ENCODE measurements at regions of chr1 and their contacts with region 1.

Region 1: GRCh38 chr1:167220537-167221125 is at the start of gene POU2F1:
- DNase-seq: peak; percentile 97
- ATAC-seq: peak; percentile 70
- H3K4me3 Mint-ChIP-seq: peak within 1 kb of the TSS; percentile 93
- H3K27ac Mint-ChIP-seq: peak within 1 kb of the TSS; percentile 89
- H3K4me1 Mint-ChIP-seq: peaks cover 37% of the 10 kb centered on the region
- H3K27me3 Mint-ChIP-seq: no peaks in the 10 kb centered on the region
- CTCF ChIP-seq: no peak
- total RNA-seq, gene POU2F1: 30.5 and 35.5 TPM in 2 replicates

Region 2: DNA sequence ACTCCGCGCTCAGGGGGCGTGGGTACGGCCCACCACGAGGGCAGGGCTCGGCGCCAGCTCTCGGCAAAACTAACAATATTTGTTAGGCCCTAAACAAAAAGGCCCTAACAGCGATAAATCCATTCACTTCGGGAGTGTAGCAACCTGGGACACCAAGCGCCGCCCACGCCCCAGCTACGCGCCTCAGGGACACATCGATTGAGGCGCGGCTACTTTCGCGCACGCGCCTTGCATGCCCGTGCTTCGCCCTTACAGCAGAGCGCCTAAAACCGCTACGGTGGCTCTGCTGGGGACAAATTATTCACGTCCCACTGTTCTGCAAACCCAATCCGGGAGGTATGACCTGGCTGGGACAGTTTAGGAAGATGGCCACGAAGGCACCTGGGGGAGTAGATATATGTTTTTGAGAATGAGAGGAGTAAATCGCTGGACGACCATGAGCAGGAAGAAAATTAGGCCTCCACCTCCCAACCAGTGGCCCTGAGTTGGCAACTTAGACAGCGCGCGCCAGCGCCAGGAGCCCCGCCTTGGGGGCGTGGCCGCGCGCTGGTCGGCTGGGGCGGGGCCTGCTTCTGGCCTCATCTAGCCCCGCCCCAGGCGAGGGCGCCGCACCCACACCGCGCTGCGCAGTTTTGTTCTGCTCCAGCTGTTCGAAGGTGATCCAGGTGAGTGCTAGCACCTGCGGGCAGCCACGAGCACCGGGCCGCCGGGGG is 1589.8 kb before region 1 on chr1 and contains the start of gene MGST3:
- CTCF ChIA-PET with region 1: no interaction called
- POLR2A ChIA-PET with region 1: no interaction called
- intact Hi-C with region 1: loop called (anchors 10 kb)
- DNase-seq: peak; percentile 84
- ATAC-seq: peak; percentile 93
- H3K4me3 Mint-ChIP-seq: no peak within 1 kb of the TSS
- H3K27ac Mint-ChIP-seq: no peak within 1 kb of the TSS
- H3K4me1 Mint-ChIP-seq: peaks cover 33% of the 10 kb centered on the region
- H3K27me3 Mint-ChIP-seq: no peaks in the 10 kb centered on the region
- CTCF ChIP-seq: no peak
- total RNA-seq, gene MGST3: 31.3 and 33.4 TPM in 2 replicates

Region 3: DNA sequence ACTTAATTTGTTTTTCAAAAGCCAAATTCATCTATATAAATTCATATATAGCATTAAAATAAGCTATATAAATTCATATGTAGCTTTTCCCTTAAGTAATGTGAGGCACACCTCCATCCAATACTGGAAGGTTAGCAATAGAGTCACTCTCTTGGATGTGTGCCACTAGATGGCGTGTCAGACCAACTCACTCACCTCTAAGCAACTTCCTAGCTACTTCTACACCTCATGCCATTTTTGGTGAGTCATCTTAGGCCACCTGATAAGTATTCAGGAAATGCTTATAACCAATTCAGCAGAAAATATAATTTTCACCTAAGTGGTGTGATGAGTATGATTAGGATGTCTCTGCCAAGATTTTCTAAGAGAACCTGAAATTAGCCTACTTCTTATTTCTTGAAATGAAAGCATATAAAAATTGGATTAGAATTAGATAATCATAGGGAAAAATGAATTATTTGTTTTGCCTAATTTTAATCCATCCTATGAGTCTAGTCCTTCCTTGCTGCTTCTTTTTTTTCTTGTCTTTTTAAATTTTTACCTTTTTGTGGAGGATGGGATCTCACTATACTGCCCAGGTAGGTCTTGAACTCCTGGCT is 310.1 kb before region 1 on chr1:
- CTCF ChIA-PET with region 1: interaction called, 7 read pairs
- POLR2A ChIA-PET with region 1: interaction called, 5 read pairs
- intact Hi-C with region 1: loop called (anchors 2 kb)
- DNase-seq: peak; percentile 37
- ATAC-seq: peak; percentile 99
- H3K4me3 Mint-ChIP-seq: no peak overlapping the region
- H3K27ac Mint-ChIP-seq: no peak overlapping the region
- H3K4me1 Mint-ChIP-seq: peaks cover 6% of the 10 kb centered on the region
- H3K27me3 Mint-ChIP-seq: no peaks in the 10 kb centered on the region
- CTCF ChIP-seq: peak; percentile 61

Region 4: DNA sequence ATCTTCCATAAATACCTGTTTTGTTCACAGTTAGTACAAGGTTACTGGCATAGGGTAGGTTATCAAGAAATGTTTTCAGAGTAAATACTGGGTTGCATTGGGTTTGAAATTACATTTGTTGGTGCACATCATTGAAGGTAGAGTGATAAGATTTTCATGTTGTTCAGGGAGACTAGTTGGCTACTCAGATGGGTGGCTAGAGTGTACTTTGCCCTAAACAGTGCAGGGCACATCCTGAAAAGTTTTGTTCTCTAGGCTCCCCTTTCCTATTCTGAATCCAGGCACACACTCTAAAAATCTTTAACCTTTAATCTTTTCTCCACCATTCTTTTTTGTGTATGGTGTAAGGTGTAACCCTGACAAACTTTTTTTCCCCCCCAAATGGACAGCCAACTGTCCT is 18.1 kb after region 1 on chr1:
- CTCF ChIA-PET with region 1: interaction called, 3 read pairs
- POLR2A ChIA-PET with region 1: interaction called, 17 read pairs
- intact Hi-C with region 1: loop called (anchors 2 kb)
- DNase-seq: no peak
- ATAC-seq: no peak
- H3K4me3 Mint-ChIP-seq: no peak overlapping the region
- H3K27ac Mint-ChIP-seq: no peak overlapping the region
- H3K4me1 Mint-ChIP-seq: peaks cover 27% of the 10 kb centered on the region
- H3K27me3 Mint-ChIP-seq: no peaks in the 10 kb centered on the region
- CTCF ChIP-seq: no peak

Region 5: DNA sequence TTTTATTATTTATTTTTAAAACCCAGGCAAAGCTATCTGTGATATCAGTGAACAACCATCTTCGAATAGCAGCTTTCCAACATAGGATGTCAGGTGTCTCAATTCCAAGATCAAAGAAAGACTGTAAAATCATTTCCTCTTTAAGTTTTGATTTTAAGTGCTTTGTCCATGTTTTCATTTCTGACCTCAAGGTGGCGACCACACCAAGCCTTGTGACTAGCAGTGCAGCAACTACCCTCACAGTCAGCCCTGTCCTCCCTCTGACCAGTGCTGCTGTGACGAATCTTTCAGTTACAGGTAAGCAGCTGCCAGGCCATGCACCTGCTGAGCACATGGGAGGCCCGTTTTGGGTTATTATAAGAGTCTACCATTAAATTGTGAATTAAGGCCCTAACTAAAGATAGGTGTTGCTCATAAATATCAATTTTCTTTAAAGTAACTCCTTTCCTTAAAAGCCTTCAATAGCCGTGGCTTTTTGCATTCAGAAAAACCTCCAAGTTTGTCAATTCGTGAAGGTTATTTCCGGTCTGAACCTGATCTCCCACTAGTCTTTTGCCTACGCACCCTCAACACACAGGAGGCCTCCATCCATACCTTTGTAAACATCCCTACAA is 180.7 kb after region 1 on chr1:
- CTCF ChIA-PET with region 1: no interaction called
- POLR2A ChIA-PET with region 1: no interaction called
- intact Hi-C with region 1: no loop called
- DNase-seq: peak; percentile 26
- ATAC-seq: peak; percentile 68
- H3K4me3 Mint-ChIP-seq: no peak overlapping the region
- H3K27ac Mint-ChIP-seq: no peak overlapping the region
- H3K4me1 Mint-ChIP-seq: no peaks in the 10 kb centered on the region
- H3K27me3 Mint-ChIP-seq: no peaks in the 10 kb centered on the region
- CTCF ChIP-seq: peak; percentile 12

Region 6: GRCh38 chr1:167430134-167430856 is 209.7 kb after region 1 on chr1:
- CTCF ChIA-PET with region 1: no interaction called
- POLR2A ChIA-PET with region 1: interaction called, 10 read pairs
- intact Hi-C with region 1: no loop called
- DNase-seq: no peak
- ATAC-seq: peak; percentile 35
- H3K4me3 Mint-ChIP-seq: peak overlapping the region; percentile 61
- H3K27ac Mint-ChIP-seq: peak overlapping the region; percentile 90
- H3K4me1 Mint-ChIP-seq: peaks cover 53% of the 10 kb centered on the region
- H3K27me3 Mint-ChIP-seq: no peaks in the 10 kb centered on the region
- CTCF ChIP-seq: no peak

Region 7: GRCh38 chr1:167627865-167628641 is 407.4 kb after region 1 on chr1:
- CTCF ChIA-PET with region 1: no interaction called
- POLR2A ChIA-PET with region 1: interaction called, 4 read pairs
- intact Hi-C with region 1: loop called (anchors 5 kb)
- DNase-seq: peak; percentile 52
- ATAC-seq: peak; percentile 70
- H3K4me3 Mint-ChIP-seq: peak overlapping the region; percentile 94
- H3K27ac Mint-ChIP-seq: peak overlapping the region; percentile 98
- H3K4me1 Mint-ChIP-seq: peaks cover 76% of the 10 kb centered on the region
- H3K27me3 Mint-ChIP-seq: no peaks in the 10 kb centered on the region
- CTCF ChIP-seq: no peak

Region 8: GRCh38 chr1:167763525-167764220 is 543.0 kb after region 1 on chr1:
- CTCF ChIA-PET with region 1: no interaction called
- POLR2A ChIA-PET with region 1: no interaction called
- intact Hi-C with region 1: no loop called
- DNase-seq: no peak
- ATAC-seq: no peak
- H3K4me3 Mint-ChIP-seq: no peak overlapping the region
- H3K27ac Mint-ChIP-seq: no peak overlapping the region
- H3K4me1 Mint-ChIP-seq: peaks cover 13% of the 10 kb centered on the region
- H3K27me3 Mint-ChIP-seq: no peaks in the 10 kb centered on the region
- CTCF ChIP-seq: no peak

Region 9: DNA sequence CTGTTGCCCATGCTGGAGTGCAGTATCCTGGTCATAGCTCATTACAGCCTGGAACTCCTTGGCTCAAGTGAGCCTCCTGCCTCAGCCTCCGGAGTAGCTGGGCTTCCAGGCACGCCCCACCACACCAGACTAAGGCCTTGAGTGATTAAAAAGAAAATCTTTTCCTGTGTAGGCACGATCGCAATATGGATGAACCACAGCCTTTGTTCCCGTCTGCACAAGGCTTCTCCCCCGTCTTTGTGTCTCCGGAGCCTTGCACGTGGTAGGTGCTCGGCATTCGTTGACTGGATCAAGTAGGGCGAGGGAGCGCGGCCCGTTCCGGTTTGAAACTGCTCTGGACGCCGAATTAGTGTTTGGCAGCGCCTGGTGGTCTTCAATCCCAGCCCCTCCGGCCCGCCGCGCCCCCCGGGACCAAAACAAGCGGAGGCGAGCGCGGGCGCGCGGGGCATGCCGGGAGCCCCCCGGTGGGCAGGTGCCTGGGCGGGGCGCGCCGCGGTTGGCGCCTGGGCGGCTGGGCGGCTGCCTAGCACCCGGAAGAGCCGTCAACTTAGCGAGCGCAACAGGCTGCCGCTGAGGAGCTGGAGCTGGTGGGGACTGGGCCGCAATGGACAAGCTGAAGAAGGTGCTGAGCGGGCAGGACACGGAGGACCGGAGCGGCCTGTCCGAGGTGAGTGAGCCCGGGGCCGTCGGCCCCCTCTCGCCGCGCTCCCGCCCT is 1005.0 kb after region 1 on chr1 and contains the start of gene SFT2D2:
- CTCF ChIA-PET with region 1: no interaction called
- POLR2A ChIA-PET with region 1: no interaction called
- intact Hi-C with region 1: loop called (anchors 2 kb)
- DNase-seq: peak; percentile 85
- ATAC-seq: peak; percentile 92
- H3K4me3 Mint-ChIP-seq: peak within 1 kb of the TSS; percentile 96
- H3K27ac Mint-ChIP-seq: peak within 1 kb of the TSS; percentile 93
- H3K4me1 Mint-ChIP-seq: peaks cover 47% of the 10 kb centered on the region
- H3K27me3 Mint-ChIP-seq: no peaks in the 10 kb centered on the region
- CTCF ChIP-seq: no peak
- total RNA-seq, gene SFT2D2: 62.7 and 63.4 TPM in 2 replicates

Measured in activated B cell treated with CpG ODN at 0.5 μM for 24 hours (primary cell).